ENCODE measurements at regions of chr19 and their contacts with region 1.

Region 1: GRCh38 chr19:31349160-31349881 is at the start of gene TSHZ3:
- DNase-seq: peak in 6 of 9 experiments; percentile 12 to 69 (median 48)
- ATAC-seq: peak; percentile 45
- H3K4me3 ChIP-seq: peak within 1 kb of the TSS; percentile 37 to 48
- H3K4me3 Mint-ChIP-seq: peak within 1 kb of the TSS; percentile 74
- H3K27ac ChIP-seq: no peak within 1 kb of the TSS
- H3K27ac Mint-ChIP-seq: no peak within 1 kb of the TSS
- H3K4me1 ChIP-seq: peaks cover 22% of the 10 kb centered on the region
- H3K4me1 Mint-ChIP-seq: peaks cover 23% of the 10 kb centered on the region
- H3K27me3 ChIP-seq: peaks cover 30 to 53% of the 10 kb centered on the region in 2 experiments
- H3K27me3 Mint-ChIP-seq: peaks cover 58% of the 10 kb centered on the region
- CTCF ChIP-seq: no peak
- total RNA-seq, gene TSHZ3: not detected

Region 2: GRCh38 chr19:30784850-30785457 is 564.4 kb before region 1 on chr19:
- CTCF ChIA-PET with region 1: no interaction called
- POLR2A ChIA-PET with region 1: no interaction called
- intact Hi-C with region 1: loop called in 1 of 2 experiments (anchors 10 kb)
- DNase-seq: peak; percentile 18 to 72 (median 51)
- ATAC-seq: no peak
- H3K4me3 ChIP-seq: no peak overlapping the region
- H3K4me3 Mint-ChIP-seq: no peak overlapping the region
- H3K27ac ChIP-seq: no peak overlapping the region
- H3K27ac Mint-ChIP-seq: no peak overlapping the region
- H3K4me1 ChIP-seq: no peaks in the 10 kb centered on the region
- H3K4me1 Mint-ChIP-seq: no peaks in the 10 kb centered on the region
- H3K27me3 ChIP-seq: no peaks in the 10 kb centered on the region
- H3K27me3 Mint-ChIP-seq: peaks cover 9% of the 10 kb centered on the region
- CTCF ChIP-seq: peak; percentile 44